Right ventricle myocardium inferior (tissue), 1 donor: ENCODE measurements at regions of chr6 and their contacts with region 1.

Region 1: DNA sequence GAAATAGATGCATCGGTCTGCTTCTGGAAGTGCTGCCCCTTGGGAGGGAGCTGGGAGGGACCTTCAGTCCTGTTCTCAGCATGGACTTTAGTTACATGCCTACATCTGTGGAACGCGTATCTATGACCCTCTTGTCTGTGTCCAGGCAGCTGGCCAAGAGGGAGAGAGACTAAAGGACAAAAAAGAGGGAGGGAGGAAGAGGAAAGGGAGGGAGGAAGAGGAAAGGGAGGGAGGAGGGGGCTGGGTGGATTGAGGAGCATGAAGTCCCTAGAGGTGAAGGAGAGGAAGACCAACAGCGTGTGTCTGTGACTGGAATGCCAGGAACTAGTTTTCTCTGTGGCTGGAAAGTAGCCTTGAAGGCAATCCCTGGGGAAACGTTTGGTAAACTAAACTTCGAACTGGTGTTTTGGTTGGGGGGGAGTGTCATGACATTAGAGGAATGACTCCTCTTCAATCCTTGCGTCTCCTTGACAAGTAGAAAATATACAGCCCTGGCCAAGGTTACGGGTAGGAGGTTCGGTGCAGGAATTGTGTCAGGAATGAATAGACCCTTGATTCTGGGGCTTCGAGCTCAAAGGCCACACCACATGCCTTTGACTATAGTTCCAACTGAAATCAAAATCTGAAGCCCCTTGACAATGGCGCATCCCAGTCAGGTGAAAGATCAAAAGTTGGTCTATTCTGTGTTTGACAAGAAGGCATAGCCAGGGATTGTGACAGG is 52.0 kb upstream of the PLEKHG1 start:
- DNase-seq: peak; percentile 76
- ATAC-seq: peak; percentile 91

Region 2: GRCh38 chr6:150491131-150491810 is 56.4 kb before region 1 on chr6:
- intact Hi-C with region 1: loop called (anchors 5 kb)
- DNase-seq: no peak
- ATAC-seq: no peak